Gastrocnemius medialis (tissue), 4 donors: ENCODE measurements at regions of chr12 and their contacts with region 1.

Region 1: DNA sequence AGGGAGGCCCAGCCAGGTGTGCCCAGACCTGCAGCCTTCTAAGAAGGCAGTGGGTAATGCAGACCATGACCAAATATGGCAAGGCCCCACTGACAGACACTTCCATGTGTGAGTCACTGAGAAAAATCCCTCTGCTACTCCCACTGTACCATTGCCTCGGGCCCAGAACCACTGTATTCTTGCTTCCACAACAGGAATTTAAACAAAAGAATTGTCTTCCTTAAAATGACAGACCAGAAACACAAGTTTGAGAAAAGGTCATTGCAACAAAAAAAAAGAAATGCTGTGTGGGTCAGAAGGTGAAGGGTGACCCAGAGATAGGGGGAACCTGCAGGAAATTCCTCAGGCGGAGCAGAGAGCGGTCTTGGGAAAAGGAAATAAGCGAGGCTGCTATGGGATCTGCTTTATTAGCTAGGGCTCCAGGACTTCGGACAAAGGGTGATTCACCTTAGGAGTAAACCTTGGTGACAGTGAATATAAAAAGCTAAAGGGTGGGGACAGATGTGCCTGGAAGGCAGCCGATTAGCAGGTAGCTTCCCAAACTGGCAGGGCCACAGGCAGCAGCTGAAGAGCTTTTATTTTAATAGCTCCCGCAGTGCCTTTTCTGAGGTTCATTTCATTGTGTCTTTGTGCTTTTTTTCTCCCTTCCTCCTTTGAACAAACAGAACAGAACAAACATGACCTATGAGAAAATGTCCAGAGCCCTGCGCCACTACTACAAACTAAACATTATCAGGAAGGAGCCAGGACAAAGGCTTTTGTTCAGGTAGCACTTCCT is 185.3 kb upstream of the BCL2L14 start:
- DNase-seq: no peak
- ATAC-seq: no peak
- H3K4me3 ChIP-seq: no peak overlapping the region
- H3K27ac ChIP-seq: peak overlapping the region in 3 of 4 donors; percentile 16 to 40 (median 31)
- H3K4me1 ChIP-seq: peaks cover 8 to 9% of the 10 kb centered on the region in 2 donors
- H3K27me3 ChIP-seq: no peaks in the 10 kb centered on the region
- CTCF ChIP-seq: no peak
- POLR2A ChIP-seq: no peak

Region 2: DNA sequence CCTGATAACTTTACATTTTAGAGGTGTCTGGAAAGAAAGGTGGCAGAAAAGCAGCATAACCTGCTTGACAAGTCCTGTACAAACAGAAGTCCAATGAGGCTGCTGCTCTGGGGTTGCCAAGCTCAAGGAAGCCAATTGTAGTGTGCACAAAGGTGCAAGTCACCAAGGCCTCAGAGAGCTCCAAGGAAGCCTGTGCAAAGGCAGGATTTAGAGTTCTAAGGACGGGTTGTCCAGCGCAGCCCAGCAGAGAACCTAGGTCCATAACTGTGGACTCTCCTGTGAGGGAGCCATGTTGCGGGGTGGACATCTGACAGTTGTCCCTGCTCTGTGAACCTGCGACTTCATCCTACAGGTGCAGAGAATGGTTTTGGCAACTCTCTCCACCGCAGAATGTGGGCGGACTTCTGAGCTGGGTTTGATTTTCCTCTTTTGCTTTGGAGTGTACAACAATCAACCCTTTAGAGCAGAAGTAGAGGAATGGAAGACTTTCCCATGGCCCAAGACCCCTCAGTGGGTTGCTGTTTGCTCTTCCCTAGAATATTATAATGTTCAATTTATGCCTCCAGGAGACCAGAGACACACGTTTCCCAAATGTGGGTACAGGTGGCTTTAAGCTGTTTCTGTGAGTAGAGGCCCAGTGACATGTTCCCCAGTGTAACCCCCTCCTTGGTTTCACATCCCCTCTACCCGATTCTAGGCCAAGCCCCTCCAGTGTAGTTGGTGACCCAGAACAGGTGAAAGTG is 155.0 kb before region 1 on chr12:
- in situ Hi-C with region 1: no loop called
- intact Hi-C with region 1: loop called (anchors 10 kb)
- DNase-seq: no peak
- ATAC-seq: no peak
- H3K4me3 ChIP-seq: no peak overlapping the region
- H3K27ac ChIP-seq: no peak overlapping the region
- H3K4me1 ChIP-seq: no peaks in the 10 kb centered on the region
- H3K27me3 ChIP-seq: no peaks in the 10 kb centered on the region
- CTCF ChIP-seq: no peak
- POLR2A ChIP-seq: no peak